SK-N-SH (cell line): ENCODE measurements at regions of chr5 and their contacts with region 1.

Region 1: DNA sequence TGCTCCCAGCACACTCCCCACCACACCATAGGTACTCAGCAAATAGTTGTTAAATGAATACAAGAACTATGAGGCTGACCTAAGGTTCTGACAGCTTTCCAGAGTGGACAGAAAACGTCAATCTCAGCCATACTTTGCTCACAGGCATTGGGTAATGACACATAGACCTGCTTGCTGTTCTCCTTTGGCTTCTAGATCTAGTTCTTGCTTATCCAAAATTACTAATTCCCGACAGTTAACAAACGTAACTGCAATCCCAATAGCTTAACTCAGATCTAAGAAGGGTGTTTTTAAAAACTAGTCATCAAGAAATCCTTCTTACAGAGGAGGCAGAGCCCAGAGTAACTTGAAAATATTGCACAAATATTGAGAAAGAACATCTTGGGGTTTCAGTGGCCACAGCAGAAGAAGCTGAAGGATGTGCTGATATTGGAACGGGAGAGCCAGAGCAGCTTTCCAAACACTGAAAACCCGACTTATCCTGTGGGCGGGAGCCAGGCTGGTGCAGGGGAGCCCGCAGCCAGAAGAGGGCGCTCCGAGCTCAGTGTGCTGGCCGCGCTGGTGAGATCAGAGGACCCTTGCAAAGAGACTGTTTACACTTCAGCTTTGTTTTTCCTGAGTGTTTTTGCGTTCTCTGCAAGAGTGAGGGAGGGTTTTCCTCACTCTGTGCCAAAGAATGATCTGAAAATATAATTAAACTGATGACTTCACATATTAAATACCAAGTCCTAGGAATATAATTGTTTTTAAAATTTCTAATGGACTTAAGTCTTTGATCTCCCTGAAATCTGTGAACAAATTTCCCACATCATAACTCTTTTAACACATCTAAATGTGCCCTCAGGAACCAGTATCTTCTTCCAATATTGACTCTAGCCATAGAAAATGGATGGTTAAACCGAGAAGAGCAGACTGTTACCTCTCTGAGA is 30.3 kb downstream of the FGF1 start:
- DNase-seq: peak; percentile 91
- H3K4me3 ChIP-seq: no peak overlapping the region; a peak in 1 of 4 replicates
- H3K27ac ChIP-seq: no peak overlapping the region; a peak in 1 of 4 replicates
- H3K4me1 ChIP-seq: peaks cover 4 to 5% of the 10 kb centered on the region in 2 experiments; a peak in 2 of 4 replicates
- H3K27me3 ChIP-seq: no peaks in the 10 kb centered on the region
- CTCF ChIP-seq: peak; percentile 99
- EP300 ChIP-seq: no peak
- RAD21 ChIP-seq: peak; percentile 99

Region 2: DNA sequence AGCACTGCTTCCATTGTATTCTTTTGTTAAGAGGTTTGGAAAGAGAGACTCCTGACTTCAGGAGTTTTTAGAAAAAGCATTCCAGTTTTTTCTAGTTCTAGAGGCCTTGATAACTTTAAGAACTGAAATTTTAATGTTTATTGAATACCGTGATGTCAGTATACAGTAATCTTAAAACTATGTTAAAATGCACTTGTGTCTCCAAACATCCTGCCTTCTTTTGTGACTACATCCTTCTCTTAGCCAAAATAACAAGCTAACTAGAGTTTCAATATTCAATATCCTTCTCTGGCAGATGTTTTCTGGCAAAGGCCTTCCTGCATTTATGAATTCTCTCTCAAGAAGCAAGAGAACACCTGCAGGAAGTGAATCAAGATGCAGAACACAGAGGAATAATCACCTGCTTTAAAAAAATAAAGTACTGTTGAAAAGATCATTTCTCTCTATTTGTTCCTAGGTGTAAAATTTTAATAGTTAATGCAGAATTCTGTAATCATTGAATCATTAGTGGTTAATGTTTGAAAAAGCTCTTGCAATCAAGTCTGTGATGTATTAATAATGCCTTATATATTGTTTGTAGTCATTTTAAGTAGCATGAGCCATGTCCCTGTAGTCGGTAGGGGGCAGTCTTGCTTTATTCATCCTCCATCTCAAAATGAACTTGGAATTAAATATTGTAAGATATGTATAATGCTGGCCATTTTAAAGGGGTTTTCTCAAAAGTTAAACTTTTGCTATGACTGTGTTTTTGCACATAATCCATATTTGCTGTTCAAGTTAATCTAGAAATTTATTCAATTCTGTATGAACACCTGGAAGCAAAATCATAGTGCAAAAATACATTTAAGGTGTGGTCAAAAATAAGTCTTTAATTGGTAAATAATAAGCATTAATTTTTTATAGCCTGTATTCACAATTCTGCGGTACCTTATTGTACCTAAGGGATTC is 503.9 kb before region 1 on chr5:
- CTCF ChIA-PET with region 1: interaction called, 15 read pairs
- POLR2A ChIA-PET with region 1: no interaction called
- DNase-seq: peak; percentile 61
- H3K4me3 ChIP-seq: no peak overlapping the region; a peak in 1 of 4 replicates
- H3K27ac ChIP-seq: peak overlapping the region in 1 of 2 experiments; percentile 79; a peak in 3 of 4 replicates
- H3K4me1 ChIP-seq: peaks cover 0 to 7% of the 10 kb centered on the region in 2 experiments; a peak in 3 of 4 replicates
- H3K27me3 ChIP-seq: no peaks in the 10 kb centered on the region
- CTCF ChIP-seq: peak; percentile 97
- EP300 ChIP-seq: no peak
- RAD21 ChIP-seq: peak; percentile 97

Region 3: DNA sequence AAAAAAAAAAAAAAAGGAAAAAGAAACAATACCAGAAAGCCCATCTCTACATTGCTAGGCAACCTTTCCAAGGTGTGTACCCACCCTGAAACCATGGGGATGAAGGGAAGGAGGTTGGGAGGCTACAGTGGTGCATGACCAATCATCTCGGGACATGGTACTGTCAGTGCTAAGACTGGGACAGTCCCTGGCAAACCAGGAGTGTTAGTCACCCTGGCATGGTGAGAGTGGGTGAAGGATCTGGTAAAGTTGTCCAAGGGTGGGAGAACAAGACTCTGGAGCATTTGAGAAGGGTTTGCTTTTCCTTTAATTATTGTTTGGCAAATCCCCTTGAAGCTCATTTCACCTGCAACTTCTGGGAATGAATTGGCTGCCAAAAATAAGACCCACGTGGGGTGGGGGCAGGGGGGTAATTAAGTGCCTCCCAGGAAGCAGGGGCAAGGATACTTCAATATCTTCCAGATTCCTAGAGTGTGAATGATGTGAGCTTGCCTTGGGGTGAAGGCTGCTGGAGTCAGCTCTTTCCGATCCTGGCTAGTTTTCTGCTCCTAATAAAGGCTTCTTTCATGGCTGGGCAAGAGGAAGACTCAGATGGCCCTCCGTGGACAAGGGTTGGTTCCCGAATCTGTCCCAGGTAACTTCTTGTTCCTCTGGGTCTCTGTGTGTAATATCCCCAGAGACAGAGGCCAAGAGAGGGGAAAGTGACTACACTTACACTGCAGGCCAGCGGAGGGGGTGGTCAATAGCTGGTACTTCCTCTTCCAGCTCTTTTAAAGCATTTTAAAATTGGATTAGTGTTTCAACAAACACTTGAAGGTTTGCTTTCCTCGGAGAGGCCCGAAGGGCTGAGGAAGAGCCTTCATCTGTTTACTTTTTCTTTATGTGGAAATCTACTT is 269.2 kb before region 1 on chr5:
- CTCF ChIA-PET with region 1: no interaction called
- POLR2A ChIA-PET with region 1: no interaction called
- DNase-seq: no peak
- H3K4me3 ChIP-seq: no peak overlapping the region
- H3K27ac ChIP-seq: no peak overlapping the region
- H3K4me1 ChIP-seq: peaks cover 18 to 47% of the 10 kb centered on the region in 2 experiments; a peak in 3 of 4 replicates
- H3K27me3 ChIP-seq: no peaks in the 10 kb centered on the region
- CTCF ChIP-seq: no peak
- EP300 ChIP-seq: no peak
- RAD21 ChIP-seq: no peak

Region 4: DNA sequence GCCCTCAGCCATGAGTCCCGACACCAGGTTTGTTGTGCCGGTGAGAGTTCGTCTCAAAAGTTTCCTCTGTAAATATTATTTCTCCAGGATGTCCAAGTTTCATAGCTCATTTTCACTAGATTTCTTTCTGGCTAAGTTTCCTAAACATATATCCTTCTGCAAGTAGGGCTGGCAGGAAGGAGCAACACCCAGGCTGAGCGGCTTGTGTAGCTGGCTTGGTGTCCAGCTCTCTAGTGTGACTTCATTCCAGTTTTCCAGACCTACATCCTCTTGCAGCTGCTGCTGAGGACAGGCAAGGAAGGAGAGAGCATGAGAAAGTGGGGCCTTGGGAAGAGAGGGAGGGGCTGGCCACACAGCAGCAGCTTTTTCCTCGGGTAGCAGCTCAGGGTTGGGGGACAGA is 50.0 kb before region 1 on chr5:
- CTCF ChIA-PET with region 1: interaction called, 77 read pairs
- POLR2A ChIA-PET with region 1: no interaction called
- DNase-seq: no peak
- H3K4me3 ChIP-seq: no peak overlapping the region
- H3K27ac ChIP-seq: no peak overlapping the region
- H3K4me1 ChIP-seq: peaks cover 0 to 1% of the 10 kb centered on the region in 2 experiments; a peak in 1 of 4 replicates
- H3K27me3 ChIP-seq: no peaks in the 10 kb centered on the region
- CTCF ChIP-seq: no peak
- EP300 ChIP-seq: no peak
- RAD21 ChIP-seq: no peak

Region 5: DNA sequence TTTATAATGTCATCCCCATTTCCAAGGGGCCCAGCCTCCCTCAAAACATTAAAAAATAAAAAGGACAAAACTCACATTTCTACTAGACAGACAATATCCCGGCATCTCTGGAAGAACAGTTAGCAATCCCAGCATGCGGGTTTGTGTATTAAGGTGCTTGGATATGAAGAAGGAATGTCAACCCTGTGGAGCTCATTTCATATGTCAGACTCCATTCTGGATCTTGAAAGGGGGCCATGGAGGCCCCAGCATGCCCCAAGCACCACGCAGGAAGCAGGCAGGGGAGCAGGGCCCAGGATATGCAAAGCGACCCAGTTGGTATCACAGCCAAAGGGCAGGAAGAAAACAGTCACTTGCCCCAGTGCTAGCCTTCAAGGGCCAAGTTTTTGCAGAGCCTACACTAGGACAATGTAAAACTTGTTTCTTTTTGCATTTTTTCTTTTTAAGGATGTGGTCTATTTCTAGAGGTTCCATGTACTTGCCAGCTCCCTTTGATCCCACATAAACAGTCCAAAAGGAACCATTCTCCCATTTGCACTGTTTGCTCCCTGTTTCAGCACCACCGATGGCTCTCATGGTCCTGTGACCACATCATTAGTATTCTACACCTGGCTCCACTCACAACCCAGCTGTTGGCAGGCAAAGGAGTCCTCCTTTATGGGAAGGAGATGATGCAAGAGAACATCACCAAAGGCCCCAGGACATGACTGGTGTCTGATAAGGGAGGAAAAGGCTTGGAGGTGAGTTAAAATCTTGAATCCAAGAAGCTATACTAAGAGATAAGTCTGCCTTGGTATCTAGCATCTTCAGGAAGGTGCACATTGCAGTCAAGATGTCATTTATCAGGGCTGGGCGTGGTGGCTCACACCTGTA is 28.0 kb before region 1 on chr5:
- CTCF ChIA-PET with region 1: interaction called, 18 read pairs
- POLR2A ChIA-PET with region 1: no interaction called
- DNase-seq: no peak
- H3K4me3 ChIP-seq: no peak overlapping the region
- H3K27ac ChIP-seq: no peak overlapping the region
- H3K4me1 ChIP-seq: peaks cover 21 to 26% of the 10 kb centered on the region in 2 experiments
- H3K27me3 ChIP-seq: no peaks in the 10 kb centered on the region
- CTCF ChIP-seq: no peak
- EP300 ChIP-seq: no peak
- RAD21 ChIP-seq: no peak

Region 6: GRCh38 chr5:142674531-142675469 is 19.2 kb after region 1 on chr5:
- CTCF ChIA-PET with region 1: interaction called, 60 read pairs
- POLR2A ChIA-PET with region 1: no interaction called
- DNase-seq: no peak
- H3K4me3 ChIP-seq: no peak overlapping the region
- H3K27ac ChIP-seq: peak overlapping the region in 1 of 2 experiments; percentile 80; a peak in 2 of 4 replicates
- H3K4me1 ChIP-seq: peaks cover 0 to 19% of the 10 kb centered on the region in 2 experiments; a peak in 2 of 4 replicates
- H3K27me3 ChIP-seq: no peaks in the 10 kb centered on the region
- CTCF ChIP-seq: no peak
- EP300 ChIP-seq: no peak
- RAD21 ChIP-seq: no peak

Region 7: DNA sequence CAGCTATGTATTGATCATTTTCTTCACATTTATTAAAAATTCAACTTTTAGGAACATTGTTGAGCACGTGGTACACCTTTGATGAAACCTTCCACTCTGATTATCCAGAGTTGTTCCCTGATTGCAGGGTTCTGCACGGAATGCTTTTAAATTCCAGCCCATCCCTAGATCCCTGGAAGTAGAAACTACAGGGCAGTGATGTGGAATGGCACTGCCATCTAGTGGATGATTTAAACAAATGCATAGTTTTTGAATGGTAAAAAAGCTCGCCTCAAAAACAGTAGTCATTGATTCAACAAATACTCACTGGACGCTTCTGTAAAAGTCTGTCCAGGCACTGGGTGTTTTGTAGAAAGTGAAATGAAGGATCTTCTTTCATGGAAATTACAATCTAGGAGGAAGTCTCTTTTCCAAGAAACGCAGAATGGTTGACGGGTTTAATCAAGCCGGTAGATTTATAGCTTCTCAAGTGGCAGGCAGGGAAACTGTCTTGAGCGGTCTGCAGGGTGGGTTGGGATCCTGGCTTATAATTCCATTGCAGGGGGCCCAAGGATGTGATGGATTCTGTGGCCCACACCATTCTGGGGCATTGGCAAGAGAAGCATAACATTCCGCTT is 233.0 kb after region 1 on chr5:
- CTCF ChIA-PET with region 1: interaction called, 13 read pairs
- POLR2A ChIA-PET with region 1: no interaction called
- DNase-seq: peak; percentile 70
- H3K4me3 ChIP-seq: no peak overlapping the region; a peak in 1 of 4 replicates
- H3K27ac ChIP-seq: no peak overlapping the region
- H3K4me1 ChIP-seq: no peaks in the 10 kb centered on the region; a peak in 2 of 4 replicates
- H3K27me3 ChIP-seq: no peaks in the 10 kb centered on the region
- CTCF ChIP-seq: peak; percentile 78
- EP300 ChIP-seq: no peak
- RAD21 ChIP-seq: peak; percentile 88